ENCODE measurements at regions of chr16 and their contacts with region 1.

Region 1: GRCh38 chr16:81035398-81035974 is at the start of gene ATMIN:
- DNase-seq: no peak
- H3K4me3 ChIP-seq: peak within 1 kb of the TSS; percentile 78 to 87 (median 83)
- H3K27ac ChIP-seq: peak within 1 kb of the TSS; percentile 75 to 85 (median 81)
- H3K4me1 ChIP-seq: peaks cover 28 to 45% (median 35%) of the 10 kb centered on the region in 4 donors
- H3K27me3 ChIP-seq: no peaks in the 10 kb centered on the region
- CTCF ChIP-seq: peak; percentile 88 to 99 (median 95)
- EP300 ChIP-seq: no peak
- POLR2A ChIP-seq: no peak
- total RNA-seq, gene ATMIN: 26.6 to 34.0 (median 30.4) TPM

Region 2: DNA sequence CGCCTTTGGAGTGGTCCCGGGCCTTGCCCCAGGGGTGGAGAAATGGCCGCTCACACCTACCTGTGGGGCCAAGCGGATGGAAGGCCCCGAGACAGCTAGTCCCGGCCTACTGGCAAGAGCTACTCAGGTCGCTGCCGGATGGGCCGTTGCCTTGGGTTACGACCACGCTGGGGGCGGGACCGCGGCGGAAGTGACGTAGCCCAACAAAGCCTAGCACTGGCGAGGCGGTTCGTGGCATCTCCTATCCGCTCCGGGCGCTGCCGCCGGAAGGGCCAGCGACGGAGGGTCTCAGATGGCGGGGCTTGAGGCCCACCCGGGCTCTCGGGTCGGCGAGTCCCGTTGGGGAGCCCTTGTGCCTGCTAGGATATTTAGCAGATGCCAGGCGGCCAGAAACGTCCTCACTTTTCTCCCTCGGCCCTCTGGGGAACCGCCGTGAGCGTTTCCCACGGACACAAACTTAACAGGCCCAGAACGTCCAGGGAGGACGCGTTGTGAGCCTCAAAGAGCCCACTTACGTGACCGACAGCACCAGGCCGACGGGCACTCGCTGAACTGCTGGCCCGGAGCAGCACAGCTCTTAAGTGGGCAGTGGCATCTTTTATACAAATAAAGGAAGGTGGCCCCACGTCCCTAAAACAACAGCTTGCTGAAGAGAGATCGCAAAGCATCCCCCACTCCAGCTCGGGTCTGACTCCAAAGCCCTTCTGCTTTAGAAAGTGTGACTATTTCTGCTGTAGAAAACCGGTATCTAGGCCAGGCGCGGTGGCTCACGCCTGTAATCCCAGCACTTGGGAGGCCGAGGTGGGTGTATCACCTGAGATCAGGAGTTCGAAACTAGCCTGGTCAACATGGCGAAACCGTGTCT is 41.8 kb after region 1 on chr16 and contains the start of gene C16orf46:
- intact Hi-C with region 1: loop called (anchors 1 kb)
- DNase-seq: peak; percentile 100
- H3K4me3 ChIP-seq: peak within 1 kb of the TSS; percentile 63 to 81 (median 73)
- H3K27ac ChIP-seq: peak within 1 kb of the TSS; percentile 89 to 99 (median 94)
- H3K4me1 ChIP-seq: peaks cover 6 to 13% (median 11%) of the 10 kb centered on the region in 4 donors
- H3K27me3 ChIP-seq: no peaks in the 10 kb centered on the region
- CTCF ChIP-seq: peak in 1 of 3 experiments; percentile 4
- EP300 ChIP-seq: no peak
- POLR2A ChIP-seq: peak; percentile 71
- total RNA-seq, gene C16orf46: 1.6 to 2.7 TPM in 2 of 4 donors, not detected in the others

Region 3: GRCh38 chr16:81095953-81096717 is 60.6 kb after region 1 on chr16 and contains the start of gene GCSH:
- intact Hi-C with region 1: loop called (anchors 5 kb)
- DNase-seq: peak; percentile 100
- H3K4me3 ChIP-seq: peak within 1 kb of the TSS; percentile 75 to 94 (median 86)
- H3K27ac ChIP-seq: peak within 1 kb of the TSS; percentile 75 to 92 (median 86)
- H3K4me1 ChIP-seq: peaks cover 5 to 19% (median 11%) of the 10 kb centered on the region in 4 donors
- H3K27me3 ChIP-seq: no peaks in the 10 kb centered on the region
- CTCF ChIP-seq: no peak
- EP300 ChIP-seq: no peak
- POLR2A ChIP-seq: no peak
- total RNA-seq, gene GCSH: 12.6 to 20.8 (median 16.6) TPM

Region 4: GRCh38 chr16:81737885-81738786 is 702.6 kb after region 1 on chr16:
- intact Hi-C with region 1: loop called (anchors 10 kb)
- DNase-seq: peak; percentile 94
- H3K4me3 ChIP-seq: peak overlapping the region; percentile 23 to 43 (median 31)
- H3K27ac ChIP-seq: peak overlapping the region in 3 of 4 donors; percentile 24 to 64 (median 52)
- H3K4me1 ChIP-seq: peaks cover 0 to 12% (median 11%) of the 10 kb centered on the region in 4 donors
- H3K27me3 ChIP-seq: no peaks in the 10 kb centered on the region
- CTCF ChIP-seq: peak; percentile 82 to 90 (median 89)
- EP300 ChIP-seq: no peak
- POLR2A ChIP-seq: no peak